ENCODE measurements at regions of chr2 and their contacts with region 1.

Region 1: GRCh38 chr2:7809640-7810039 is 872.2 kb upstream of the ID2 start:
- DNase-seq: peak; percentile 13
- H3K4me3 ChIP-seq: no peak overlapping the region
- H3K27ac ChIP-seq: no peak overlapping the region
- H3K4me1 ChIP-seq: no peaks in the 10 kb centered on the region
- H3K27me3 ChIP-seq: no peaks in the 10 kb centered on the region
- CTCF ChIP-seq: 0 out of 2 replicates have a peak, but pooled peaks have one; percentile 25

Region 2: GRCh38 chr2:7480431-7480830 is 329.2 kb before region 1 on chr2:
- CTCF ChIA-PET with region 1: no interaction called
- POLR2A ChIA-PET with region 1: no interaction called
- intact Hi-C with region 1: no loop called
- DNase-seq: no peak
- H3K4me3 ChIP-seq: no peak overlapping the region
- H3K27ac ChIP-seq: no peak overlapping the region
- H3K4me1 ChIP-seq: no peaks in the 10 kb centered on the region
- H3K27me3 ChIP-seq: no peaks in the 10 kb centered on the region
- CTCF ChIP-seq: no peak

Region 3: GRCh38 chr2:8119782-8120505 is 310.3 kb after region 1 on chr2:
- CTCF ChIA-PET with region 1: no interaction called
- POLR2A ChIA-PET with region 1: no interaction called
- intact Hi-C with region 1: no loop called
- DNase-seq: no peak
- H3K4me3 ChIP-seq: no peak overlapping the region
- H3K27ac ChIP-seq: no peak overlapping the region
- H3K4me1 ChIP-seq: peaks cover 9% of the 10 kb centered on the region
- H3K27me3 ChIP-seq: no peaks in the 10 kb centered on the region
- CTCF ChIP-seq: no peak

Region 4: DNA sequence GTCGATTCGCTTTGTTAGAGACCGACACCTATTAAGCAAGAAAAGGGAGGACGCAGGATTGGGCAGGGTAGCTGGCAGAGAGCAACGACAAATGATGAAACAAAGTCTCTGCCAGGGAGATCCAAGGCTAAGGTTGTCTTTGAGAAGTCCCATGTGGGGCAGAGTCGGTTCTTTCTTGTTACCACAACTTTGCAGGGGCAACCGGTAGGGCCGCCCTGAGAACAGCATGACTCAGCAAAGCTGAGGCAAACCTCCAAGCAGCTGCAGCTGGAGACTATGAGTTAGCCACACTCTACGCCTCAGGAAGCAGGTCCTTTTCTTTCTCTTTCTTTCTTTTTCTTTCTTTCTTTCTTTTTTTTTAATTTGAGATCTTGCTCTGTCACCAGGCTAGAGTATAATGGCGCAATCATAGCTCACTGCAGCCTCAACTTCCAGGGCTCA is 419.9 kb after region 1 on chr2:
- CTCF ChIA-PET with region 1: interaction called, 15 read pairs
- POLR2A ChIA-PET with region 1: no interaction called
- intact Hi-C with region 1: no loop called
- DNase-seq: peak; percentile 18
- H3K4me3 ChIP-seq: no peak overlapping the region
- H3K27ac ChIP-seq: no peak overlapping the region
- H3K4me1 ChIP-seq: no peaks in the 10 kb centered on the region
- H3K27me3 ChIP-seq: no peaks in the 10 kb centered on the region
- CTCF ChIP-seq: no peak